ENCODE measurements at regions of chr17 and their contacts with region 1.

Region 1: GRCh38 chr17:52495646-52496045 is 337.1 kb upstream of the CA10 start:
- DNase-seq: no peak
- ATAC-seq: no peak
- H3K4me3 ChIP-seq: no peak overlapping the region
- H3K4me3 Mint-ChIP-seq: no peak overlapping the region
- H3K27ac ChIP-seq: no peak overlapping the region
- H3K27ac Mint-ChIP-seq: no peak overlapping the region
- H3K4me1 ChIP-seq: no peaks in the 10 kb centered on the region
- H3K4me1 Mint-ChIP-seq: no peaks in the 10 kb centered on the region
- H3K27me3 ChIP-seq: no peaks in the 10 kb centered on the region
- H3K27me3 Mint-ChIP-seq: no peaks in the 10 kb centered on the region
- CTCF ChIP-seq: no peak

Region 2: DNA sequence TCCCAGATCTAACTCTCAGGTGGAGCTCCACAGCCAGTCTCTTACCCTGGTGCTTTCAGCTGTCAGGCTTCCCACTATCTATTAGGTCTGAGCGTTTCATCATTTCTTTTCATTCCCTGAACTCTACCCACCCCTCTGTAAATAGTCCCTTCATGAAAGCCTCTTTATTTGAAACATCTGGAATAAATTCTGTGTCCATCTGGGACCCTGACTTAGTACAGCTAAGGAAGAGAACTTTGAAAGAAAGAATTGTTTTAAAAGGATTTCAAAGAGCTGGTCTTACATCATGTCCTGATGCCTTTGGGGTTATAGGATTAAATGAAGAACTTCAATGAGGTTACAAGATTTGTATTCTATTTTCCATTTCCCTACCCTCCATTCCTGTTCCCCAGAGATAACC is 51.3 kb after region 1 on chr17:
- CTCF ChIA-PET with region 1: no interaction called
- POLR2A ChIA-PET with region 1: no interaction called
- intact Hi-C with region 1: loop called in 1 of 2 experiments (anchors 10 kb)
- DNase-seq: no peak
- ATAC-seq: no peak
- H3K4me3 ChIP-seq: no peak overlapping the region
- H3K4me3 Mint-ChIP-seq: no peak overlapping the region
- H3K27ac ChIP-seq: no peak overlapping the region
- H3K27ac Mint-ChIP-seq: no peak overlapping the region
- H3K4me1 ChIP-seq: no peaks in the 10 kb centered on the region
- H3K4me1 Mint-ChIP-seq: no peaks in the 10 kb centered on the region
- H3K27me3 ChIP-seq: no peaks in the 10 kb centered on the region
- H3K27me3 Mint-ChIP-seq: no peaks in the 10 kb centered on the region
- CTCF ChIP-seq: no peak

Measured in CD4-positive, alpha-beta T cell (primary cell).